ENCODE measurements at regions of chr1 and their contacts with region 1.

Region 1: DNA sequence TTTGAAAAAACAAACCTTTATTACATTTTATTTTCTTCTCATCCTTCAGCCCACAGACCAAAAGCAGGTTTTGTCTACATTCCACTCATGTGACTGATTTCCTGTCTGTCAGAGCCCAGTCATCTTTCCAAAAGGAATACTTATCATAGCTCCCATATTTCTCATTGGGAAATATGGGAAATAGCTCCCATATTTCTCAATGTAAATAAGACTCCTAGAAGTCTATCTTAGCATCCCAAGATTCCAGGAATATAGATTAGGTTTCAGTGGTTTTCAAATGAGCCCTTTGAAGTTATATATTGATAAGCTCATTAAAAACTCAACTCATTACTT is 19.1 kb upstream of the NRDC start:
- DNase-seq: no peak
- ATAC-seq: no peak
- H3K4me3 ChIP-seq: no peak overlapping the region
- H3K27ac ChIP-seq: no peak overlapping the region
- H3K4me1 ChIP-seq: no peaks in the 10 kb centered on the region
- H3K27me3 ChIP-seq: peaks cover 0 to 5% of the 10 kb centered on the region in 2 experiments; a peak in 1 of 4 replicates
- CTCF ChIP-seq: no peak
- EP300 ChIP-seq: no peak
- POLR2A ChIP-seq: no peak
- RAD21 ChIP-seq: no peak

Region 2: DNA sequence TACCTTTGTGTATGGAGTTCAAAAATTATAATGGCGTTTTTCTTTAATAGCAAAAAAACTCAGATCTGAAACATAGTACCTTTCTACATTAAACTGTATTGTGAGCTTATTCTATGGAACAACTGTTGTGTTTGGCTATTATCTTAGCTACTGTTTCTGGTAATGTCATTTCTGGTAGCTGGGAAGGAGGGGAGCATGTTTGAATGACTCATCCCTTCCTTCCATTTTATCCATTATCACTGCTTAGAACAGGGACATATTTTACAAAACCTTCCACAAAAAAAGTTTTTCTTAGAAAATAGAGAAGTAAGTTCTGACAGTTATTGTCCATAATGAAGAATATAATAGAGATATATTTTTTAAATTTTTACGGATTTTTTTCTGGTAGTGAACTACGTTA is 147.4 kb before region 1 on chr1:
- CTCF ChIA-PET with region 1: no interaction called
- POLR2A ChIA-PET with region 1: no interaction called
- RAD21 ChIA-PET with region 1: no interaction called
- SMC1A ChIA-PET with region 1: no interaction called
- in situ Hi-C with region 1: no loop called
- intact Hi-C with region 1: no loop called
- DNase-seq: no peak
- ATAC-seq: no peak
- H3K4me3 ChIP-seq: no peak overlapping the region
- H3K27ac ChIP-seq: no peak overlapping the region
- H3K4me1 ChIP-seq: no peaks in the 10 kb centered on the region; the same call in 1 of the 2 replicates
- H3K27me3 ChIP-seq: no peaks in the 10 kb centered on the region
- CTCF ChIP-seq: no peak
- EP300 ChIP-seq: no peak
- POLR2A ChIP-seq: no peak
- RAD21 ChIP-seq: no peak

Region 3: GRCh38 chr1:51912881-51913280 is 15.2 kb after region 1 on chr1:
- CTCF ChIA-PET with region 1: interaction called, 13 read pairs
- POLR2A ChIA-PET with region 1: no interaction called
- RAD21 ChIA-PET with region 1: interaction called, 8 read pairs
- SMC1A ChIA-PET with region 1: interaction called, 14 read pairs
- in situ Hi-C with region 1: no loop called
- intact Hi-C with region 1: no loop called
- DNase-seq: no peak
- ATAC-seq: no peak
- H3K4me3 ChIP-seq: no peak overlapping the region
- H3K27ac ChIP-seq: no peak overlapping the region
- H3K4me1 ChIP-seq: no peaks in the 10 kb centered on the region
- H3K27me3 ChIP-seq: peaks cover 0 to 2% of the 10 kb centered on the region in 2 experiments; a peak in 1 of 4 replicates
- CTCF ChIP-seq: no peak
- EP300 ChIP-seq: no peak
- POLR2A ChIP-seq: no peak
- RAD21 ChIP-seq: no peak

Region 4: GRCh38 chr1:51933344-51933743 is 35.7 kb after region 1 on chr1:
- CTCF ChIA-PET with region 1: interaction called, 14 read pairs
- POLR2A ChIA-PET with region 1: no interaction called
- RAD21 ChIA-PET with region 1: no interaction called
- SMC1A ChIA-PET with region 1: interaction called, 9 read pairs
- in situ Hi-C with region 1: no loop called
- intact Hi-C with region 1: no loop called
- DNase-seq: no peak
- ATAC-seq: no peak
- H3K4me3 ChIP-seq: no peak overlapping the region
- H3K27ac ChIP-seq: no peak overlapping the region
- H3K4me1 ChIP-seq: no peaks in the 10 kb centered on the region
- H3K27me3 ChIP-seq: no peaks in the 10 kb centered on the region
- CTCF ChIP-seq: no peak
- EP300 ChIP-seq: no peak
- POLR2A ChIP-seq: no peak
- RAD21 ChIP-seq: no peak

Region 5: GRCh38 chr1:51956528-51957509 is 59.2 kb after region 1 on chr1:
- CTCF ChIA-PET with region 1: interaction called, 11 read pairs
- POLR2A ChIA-PET with region 1: no interaction called
- RAD21 ChIA-PET with region 1: interaction called, 8 read pairs
- SMC1A ChIA-PET with region 1: interaction called, 21 read pairs
- in situ Hi-C with region 1: no loop called
- intact Hi-C with region 1: no loop called
- DNase-seq: no peak
- ATAC-seq: peak; percentile 13
- H3K4me3 ChIP-seq: no peak overlapping the region
- H3K27ac ChIP-seq: no peak overlapping the region
- H3K4me1 ChIP-seq: peaks cover 21% of the 10 kb centered on the region
- H3K27me3 ChIP-seq: no peaks in the 10 kb centered on the region
- CTCF ChIP-seq: no peak
- EP300 ChIP-seq: no peak
- POLR2A ChIP-seq: no peak
- RAD21 ChIP-seq: no peak

Region 6: DNA sequence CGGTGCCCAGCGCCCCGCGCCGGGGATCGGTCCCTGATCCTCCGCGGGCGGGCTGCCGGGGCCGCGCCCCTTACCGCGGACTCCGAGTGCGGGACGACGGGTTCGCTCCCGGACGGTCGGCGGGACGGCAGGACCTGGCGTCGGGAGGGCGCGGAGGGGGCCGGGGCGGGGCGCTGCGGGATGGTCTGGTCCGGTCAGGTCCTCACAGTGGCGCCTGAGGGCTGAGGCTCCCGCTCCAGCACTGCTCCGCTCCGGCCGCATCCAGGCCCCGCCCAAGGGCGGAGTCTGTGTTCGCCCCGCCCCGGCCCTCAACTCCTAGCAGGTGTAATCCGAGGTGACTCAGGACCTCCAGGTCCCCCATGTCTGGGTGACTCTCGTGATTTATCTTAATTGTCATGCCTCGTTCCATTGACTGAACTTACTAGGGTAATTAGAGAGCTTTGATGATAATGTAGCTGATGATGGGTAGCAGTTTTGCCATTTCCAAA is 92.9 kb after region 1 on chr1 and contains the start of gene RAB3B:
- CTCF ChIA-PET with region 1: interaction called, 177 read pairs
- POLR2A ChIA-PET with region 1: no interaction called
- RAD21 ChIA-PET with region 1: interaction called, 96 read pairs
- SMC1A ChIA-PET with region 1: interaction called, 99 read pairs
- in situ Hi-C with region 1: loop called (anchors 5 kb)
- intact Hi-C with region 1: no loop called
- DNase-seq: no peak
- ATAC-seq: peak; percentile 98
- H3K4me3 ChIP-seq: peak within 1 kb of the TSS; percentile 41; the same call in 1 of the 2 replicates
- H3K27ac ChIP-seq: no peak within 1 kb of the TSS
- H3K4me1 ChIP-seq: no peaks in the 10 kb centered on the region
- H3K27me3 ChIP-seq: peaks cover 0 to 2% of the 10 kb centered on the region in 2 experiments; a peak in 2 of 4 replicates
- CTCF ChIP-seq: no peak
- EP300 ChIP-seq: no peak
- POLR2A ChIP-seq: no peak
- RAD21 ChIP-seq: no peak
- polyA plus RNA-seq, gene RAB3B: 0.05 to 0.11 TPM

Region 7: GRCh38 chr1:52296345-52296744 is 398.7 kb after region 1 on chr1:
- CTCF ChIA-PET with region 1: interaction called, 4 read pairs
- POLR2A ChIA-PET with region 1: no interaction called
- RAD21 ChIA-PET with region 1: no interaction called
- SMC1A ChIA-PET with region 1: interaction called, 4 read pairs
- in situ Hi-C with region 1: no loop called
- intact Hi-C with region 1: loop called (anchors 5 kb)
- DNase-seq: peak; percentile 7
- ATAC-seq: peak; percentile 86
- H3K4me3 ChIP-seq: no peak overlapping the region
- H3K27ac ChIP-seq: no peak overlapping the region
- H3K4me1 ChIP-seq: no peaks in the 10 kb centered on the region
- H3K27me3 ChIP-seq: no peaks in the 10 kb centered on the region
- CTCF ChIP-seq: peak; percentile 67 to 77 (median 68)
- EP300 ChIP-seq: no peak
- POLR2A ChIP-seq: no peak
- RAD21 ChIP-seq: peak; percentile 94